ENCODE measurements at regions of chr2 and their contacts with region 1.

Region 1: DNA sequence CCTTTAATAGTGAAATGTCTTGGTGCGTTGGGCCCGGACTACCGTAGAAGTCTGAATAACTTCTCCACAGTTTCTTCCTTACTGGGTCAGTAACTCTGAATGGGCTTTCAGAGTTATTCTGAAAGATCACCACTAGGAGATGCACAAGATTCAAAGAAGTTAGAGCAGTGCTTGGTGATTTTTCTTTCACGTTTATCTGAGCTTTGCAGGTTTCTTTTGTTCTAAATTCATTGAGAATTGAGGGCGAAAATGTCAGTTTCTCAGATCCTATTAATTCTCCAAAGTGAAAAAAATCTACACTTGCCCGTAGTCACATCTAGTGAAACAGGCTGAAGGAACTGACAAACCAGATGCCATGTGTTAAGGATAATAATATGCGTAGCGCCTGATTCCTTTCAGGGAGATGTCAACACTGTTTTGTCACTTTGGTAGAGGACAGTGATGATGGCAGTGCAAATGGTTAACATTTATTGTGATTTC is 70.1 kb downstream of the QPCT start:
- DNase-seq: peak; percentile 68 to 69
- ATAC-seq: peak; percentile 90 to 93
- H3K4me3 ChIP-seq: no peak overlapping the region
- H3K27ac ChIP-seq: peak overlapping the region; percentile 8 to 15; a peak in 2 of 6 replicates
- H3K4me1 ChIP-seq: peaks cover 6% of the 10 kb centered on the region; the same call in 2 of the 3 replicates
- CTCF ChIP-seq: peak; percentile 99
- EP300 ChIP-seq: no peak
- POLR2A ChIP-seq: no peak
- RAD21 ChIP-seq: peak; percentile 99

Region 2: GRCh38 chr2:37100054-37100453 is 314.5 kb before region 1 on chr2:
- CTCF ChIA-PET with region 1: no interaction called
- POLR2A ChIA-PET with region 1: no interaction called
- DNase-seq: no peak
- ATAC-seq: peak; percentile 56 to 59; a peak in 3 of 6 replicates
- H3K4me3 ChIP-seq: no peak overlapping the region
- H3K27ac ChIP-seq: no peak overlapping the region
- H3K4me1 ChIP-seq: peaks cover 14% of the 10 kb centered on the region
- CTCF ChIP-seq: no peak
- EP300 ChIP-seq: no peak
- POLR2A ChIP-seq: no peak
- RAD21 ChIP-seq: no peak

Region 3: GRCh38 chr2:37402636-37403035 is 11.9 kb before region 1 on chr2:
- CTCF ChIA-PET with region 1: interaction called, 169 read pairs
- POLR2A ChIA-PET with region 1: interaction called, 3 read pairs
- DNase-seq: no peak
- ATAC-seq: no peak
- H3K4me3 ChIP-seq: no peak overlapping the region
- H3K27ac ChIP-seq: no peak overlapping the region
- H3K4me1 ChIP-seq: no peaks in the 10 kb centered on the region
- CTCF ChIP-seq: no peak
- EP300 ChIP-seq: no peak
- POLR2A ChIP-seq: no peak
- RAD21 ChIP-seq: no peak

Region 4: DNA sequence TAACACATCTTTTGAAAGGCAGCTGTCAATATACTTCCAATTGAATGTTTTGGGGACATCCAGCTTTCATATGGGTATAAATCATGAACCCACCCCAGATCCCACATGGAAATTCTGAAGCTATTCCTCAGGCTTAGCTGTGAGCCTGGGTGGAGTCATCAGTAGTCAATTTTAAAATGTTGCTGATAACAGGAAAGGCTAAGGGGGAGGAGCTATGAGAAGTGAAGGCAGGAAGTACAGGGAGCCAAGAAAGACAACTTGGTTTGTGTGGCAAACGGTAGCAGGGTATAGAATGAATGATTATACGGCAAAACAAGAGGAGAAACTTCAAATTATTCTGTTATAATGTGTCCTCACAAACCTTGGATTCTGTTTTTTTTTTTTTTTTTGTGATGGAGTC is 38.5 kb after region 1 on chr2:
- CTCF ChIA-PET with region 1: interaction called, 12 read pairs
- POLR2A ChIA-PET with region 1: no interaction called
- DNase-seq: no peak
- ATAC-seq: no peak
- H3K4me3 ChIP-seq: no peak overlapping the region
- H3K27ac ChIP-seq: no peak overlapping the region
- H3K4me1 ChIP-seq: no peaks in the 10 kb centered on the region
- CTCF ChIP-seq: no peak
- EP300 ChIP-seq: no peak
- POLR2A ChIP-seq: no peak
- RAD21 ChIP-seq: no peak

Region 5: DNA sequence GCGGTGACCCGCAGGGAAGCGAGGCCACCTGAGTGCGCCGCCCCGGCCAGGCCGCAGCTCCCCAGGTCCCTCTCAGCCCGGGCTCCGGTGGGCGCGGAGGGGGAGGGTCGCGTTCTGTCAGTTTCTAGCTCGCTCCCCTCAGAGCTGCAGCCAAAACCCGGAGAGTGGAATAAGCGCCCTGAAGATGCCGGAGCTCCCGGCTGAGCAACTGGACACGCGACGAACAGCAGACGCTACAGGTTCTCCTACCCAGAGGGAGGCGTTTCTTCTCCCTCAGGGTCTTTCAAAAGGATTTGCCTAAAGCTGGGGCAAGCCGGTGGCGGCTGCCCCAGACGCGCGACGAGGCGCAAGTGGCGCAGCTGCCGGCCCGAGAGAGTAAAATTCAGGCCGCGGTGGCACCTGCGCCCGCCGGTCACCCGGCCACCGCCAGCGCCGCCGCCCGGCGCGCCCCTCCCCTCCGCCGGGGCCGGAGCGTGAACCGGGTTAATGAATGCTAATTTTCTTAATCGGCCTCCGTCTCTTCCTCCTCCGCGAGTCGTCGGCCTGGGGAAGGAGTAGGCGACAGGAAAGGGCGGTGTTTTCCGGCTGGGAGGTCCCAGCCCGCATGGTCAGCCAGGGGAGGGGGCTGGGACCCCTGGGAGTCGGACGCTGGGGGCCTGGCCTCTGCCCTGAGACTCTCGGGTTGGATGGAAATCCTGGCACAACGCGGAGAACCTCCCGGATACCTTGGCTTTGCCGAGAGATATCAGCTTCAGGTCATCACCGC is 257.8 kb after region 1 on chr2:
- CTCF ChIA-PET with region 1: interaction called, 24 read pairs
- POLR2A ChIA-PET with region 1: interaction called, 4 read pairs
- DNase-seq: peak; percentile 91 to 94
- ATAC-seq: peak; percentile 67 to 72
- H3K4me3 ChIP-seq: peak overlapping the region; percentile 75
- H3K27ac ChIP-seq: peak overlapping the region; percentile 92 to 98
- H3K4me1 ChIP-seq: peaks cover 57% of the 10 kb centered on the region
- CTCF ChIP-seq: no peak
- EP300 ChIP-seq: no peak
- POLR2A ChIP-seq: no peak; the same call in 1 of the 2 replicates
- RAD21 ChIP-seq: peak; percentile 17 to 32; a peak in 1 of 5 replicates

Region 6: GRCh38 chr2:37832590-37833197 is 418.2 kb after region 1 on chr2:
- CTCF ChIA-PET with region 1: interaction called, 433 read pairs
- POLR2A ChIA-PET with region 1: interaction called, 7 read pairs
- DNase-seq: peak; percentile 84 to 88
- ATAC-seq: peak; percentile 99
- H3K4me3 ChIP-seq: no peak overlapping the region
- H3K27ac ChIP-seq: peak overlapping the region; percentile 41 to 43; a peak in 2 of 6 replicates
- H3K4me1 ChIP-seq: peaks cover 20% of the 10 kb centered on the region
- CTCF ChIP-seq: peak; percentile 99
- EP300 ChIP-seq: no peak
- POLR2A ChIP-seq: no peak
- RAD21 ChIP-seq: peak; percentile 100

Region 7: GRCh38 chr2:37877457-37878315 is 463.2 kb after region 1 on chr2:
- CTCF ChIA-PET with region 1: interaction called, 238 read pairs
- POLR2A ChIA-PET with region 1: interaction called, 4 read pairs
- DNase-seq: peak; percentile 59
- ATAC-seq: peak; percentile 69 to 90
- H3K4me3 ChIP-seq: no peak overlapping the region
- H3K27ac ChIP-seq: no peak overlapping the region; a peak in 1 of 6 replicates
- H3K4me1 ChIP-seq: no peaks in the 10 kb centered on the region
- CTCF ChIP-seq: peak; percentile 98
- EP300 ChIP-seq: no peak
- POLR2A ChIP-seq: no peak
- RAD21 ChIP-seq: peak; percentile 93 to 95

Region 8: DNA sequence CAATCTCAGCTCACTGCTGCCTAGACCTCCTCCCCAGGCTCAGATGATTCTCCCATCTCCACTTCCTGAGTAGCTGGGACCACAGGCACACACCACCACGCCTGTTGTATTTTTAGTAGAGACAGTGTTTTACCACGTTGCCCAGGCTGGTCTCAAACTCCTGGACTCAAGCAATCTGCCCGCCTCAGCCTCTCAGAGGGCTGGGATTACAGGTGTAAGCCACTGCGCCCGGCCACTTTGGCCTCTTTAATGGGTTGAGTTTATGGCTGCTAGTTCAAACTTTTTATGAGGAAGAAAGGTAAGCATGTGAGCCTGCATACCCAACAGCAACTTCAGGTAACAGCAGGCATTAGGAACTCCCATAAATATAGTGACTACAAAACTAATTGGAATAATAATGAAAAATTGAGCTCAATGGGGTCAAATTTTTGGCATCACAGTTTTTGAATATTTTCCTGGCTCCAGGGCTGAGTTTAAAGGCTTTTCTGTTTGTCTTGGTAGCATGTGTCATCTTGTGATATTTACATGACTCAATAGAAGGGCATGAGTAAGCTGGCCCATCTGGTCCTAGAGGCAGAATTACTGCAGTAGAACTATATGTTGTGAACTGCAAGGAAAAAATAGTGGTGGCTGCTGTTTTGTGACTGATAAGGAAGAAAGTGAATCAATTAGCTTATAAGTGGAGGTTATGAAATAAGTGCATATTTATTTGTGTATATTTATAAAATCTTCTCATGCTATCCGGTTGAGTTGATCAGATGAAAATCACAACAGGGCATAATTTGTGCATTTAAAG is 1276.2 kb after region 1 on chr2:
- CTCF ChIA-PET with region 1: no interaction called
- POLR2A ChIA-PET with region 1: no interaction called
- DNase-seq: peak; percentile 88 to 99
- ATAC-seq: peak; percentile 98 to 99
- H3K4me3 ChIP-seq: 0 out of 3 replicates have a peak overlapping the region, but pooled peaks have one; percentile 5
- H3K27ac ChIP-seq: peak overlapping the region; percentile 90 to 93
- H3K4me1 ChIP-seq: peaks cover 63% of the 10 kb centered on the region
- CTCF ChIP-seq: no peak
- EP300 ChIP-seq: peak; percentile 73 to 84; a peak in 2 of 5 replicates
- POLR2A ChIP-seq: no peak
- RAD21 ChIP-seq: peak; percentile 34 to 52

Measured in A549 (cell line).